K562 (cell line): ENCODE measurements at regions of chr20 and their contacts with region 1.

Region 1: GRCh38 chr20:5741089-5741488 is 9.1 kb upstream of the SHLD1 start:
- DNase-seq: peak; percentile 55 to 83 (median 64)
- ATAC-seq: peak; percentile 80
- H3K4me3 ChIP-seq: no peak overlapping the region
- H3K27ac ChIP-seq: no peak overlapping the region
- H3K4me1 ChIP-seq: peaks cover 16 to 20% of the 10 kb centered on the region in 2 experiments; a peak in 4 of 5 replicates
- H3K27me3 ChIP-seq: no peaks in the 10 kb centered on the region
- CTCF ChIP-seq: no peak
- EP300 ChIP-seq: peak; percentile 86
- POLR2A ChIP-seq: no peak
- RAD21 ChIP-seq: no peak

Region 2: DNA sequence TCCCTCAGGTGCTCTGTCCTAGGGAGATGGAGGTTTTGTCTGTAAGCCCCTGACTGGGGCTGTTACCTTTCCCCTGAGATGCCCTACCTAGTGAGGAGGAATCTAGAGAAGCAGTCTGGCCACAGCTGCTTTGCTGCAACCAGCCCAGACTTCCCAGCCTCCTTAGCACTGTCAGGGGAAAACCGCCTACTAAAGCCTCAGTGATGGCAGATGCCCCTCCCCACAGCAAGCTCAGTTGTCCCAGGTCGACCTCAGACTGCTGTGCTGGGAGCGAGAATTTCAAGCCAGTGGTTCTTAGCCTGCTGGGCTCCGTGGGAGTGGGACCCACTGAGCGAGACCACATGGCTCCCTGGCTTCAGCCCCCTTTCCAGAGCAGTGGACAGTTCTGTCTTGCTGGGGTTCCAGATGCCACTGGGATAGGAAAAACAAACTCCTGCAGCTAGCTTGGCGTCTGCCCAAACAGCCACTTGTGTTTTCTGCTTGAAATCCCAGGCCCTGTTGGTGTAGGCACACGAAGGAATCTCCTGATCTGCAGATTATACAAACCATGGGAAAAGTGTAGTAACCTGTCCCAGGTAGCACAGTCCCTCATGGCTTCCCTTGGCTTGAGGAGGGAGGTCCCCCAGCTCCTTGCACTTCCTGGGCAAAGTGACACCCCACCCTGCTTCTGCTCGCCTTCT is 277.9 kb before region 1 on chr20:
- CTCF ChIA-PET with region 1: no interaction called
- POLR2A ChIA-PET with region 1: no interaction called
- in situ Hi-C with region 1: no loop called
- intact Hi-C with region 1: no loop called
- DNase-seq: no peak
- ATAC-seq: no peak
- H3K4me3 ChIP-seq: no peak overlapping the region
- H3K27ac ChIP-seq: no peak overlapping the region
- H3K4me1 ChIP-seq: peaks cover 0 to 4% of the 10 kb centered on the region in 2 experiments; a peak in 1 of 5 replicates
- H3K27me3 ChIP-seq: peaks cover 0 to 9% of the 10 kb centered on the region in 2 experiments; a peak in 2 of 5 replicates
- CTCF ChIP-seq: no peak
- EP300 ChIP-seq: no peak
- POLR2A ChIP-seq: no peak
- RAD21 ChIP-seq: no peak

Region 3: GRCh38 chr20:5658912-5659345 is 82.2 kb before region 1 on chr20:
- CTCF ChIA-PET with region 1: no interaction called
- POLR2A ChIA-PET with region 1: no interaction called
- in situ Hi-C with region 1: no loop called
- intact Hi-C with region 1: no loop called
- DNase-seq: peak in 1 of 4 experiments; percentile 52
- ATAC-seq: 0 out of 3 replicates have a peak, but pooled peaks have one; percentile 12
- H3K4me3 ChIP-seq: no peak overlapping the region
- H3K27ac ChIP-seq: peak overlapping the region; percentile 54; the same call in 1 of the 3 replicates
- H3K4me1 ChIP-seq: peaks cover 8 to 18% of the 10 kb centered on the region in 2 experiments
- H3K27me3 ChIP-seq: no peaks in the 10 kb centered on the region
- CTCF ChIP-seq: no peak
- EP300 ChIP-seq: no peak
- POLR2A ChIP-seq: no peak
- RAD21 ChIP-seq: no peak

Region 4: DNA sequence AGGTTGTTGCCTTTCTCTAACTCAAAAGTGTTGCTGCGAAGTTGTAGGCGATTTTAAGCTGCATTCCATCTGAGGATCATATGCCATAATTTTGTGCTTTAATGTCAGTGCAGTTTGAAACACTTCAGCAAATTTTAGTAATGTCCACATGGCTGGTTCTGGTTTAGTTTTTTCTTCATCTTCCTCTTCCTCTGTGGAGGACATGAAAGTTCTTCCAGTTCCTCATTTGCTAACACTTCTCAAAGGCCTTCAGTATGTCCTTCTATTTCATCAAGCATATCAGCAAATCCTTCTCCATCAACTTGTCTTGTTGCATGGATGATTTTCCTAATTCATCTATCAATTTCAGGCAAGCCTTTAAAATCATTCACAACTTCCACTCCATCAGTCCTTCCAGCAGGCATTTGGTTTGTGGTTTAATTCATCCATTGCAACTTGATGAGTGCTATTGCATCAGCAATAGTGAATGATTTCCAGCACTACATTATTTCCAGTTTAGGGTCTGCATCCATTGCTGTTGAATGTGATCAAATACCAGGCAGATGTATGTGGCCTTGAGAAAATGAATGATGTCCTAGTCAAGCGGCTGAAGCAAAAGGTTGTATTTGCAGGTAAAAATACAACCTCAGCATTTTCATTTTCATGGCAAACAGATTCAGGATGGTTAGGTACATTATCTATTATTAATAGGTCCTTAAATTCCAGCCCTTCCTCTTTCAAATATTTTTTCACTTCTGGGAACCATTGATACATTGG is 29.3 kb after region 1 on chr20:
- CTCF ChIA-PET with region 1: no interaction called
- POLR2A ChIA-PET with region 1: no interaction called
- in situ Hi-C with region 1: no loop called
- intact Hi-C with region 1: no loop called
- DNase-seq: no peak
- ATAC-seq: peak; percentile 43; the same call in 2 of the 3 replicates
- H3K4me3 ChIP-seq: no peak overlapping the region
- H3K27ac ChIP-seq: no peak overlapping the region
- H3K4me1 ChIP-seq: peaks cover 0 to 14% of the 10 kb centered on the region in 2 experiments; a peak in 3 of 5 replicates
- H3K27me3 ChIP-seq: no peaks in the 10 kb centered on the region
- CTCF ChIP-seq: no peak
- EP300 ChIP-seq: peak; percentile 40; the same call in 1 of the 2 replicates
- POLR2A ChIP-seq: no peak
- RAD21 ChIP-seq: no peak

Region 5: GRCh38 chr20:5780846-5781217 is 39.7 kb after region 1 on chr20:
- CTCF ChIA-PET with region 1: no interaction called
- POLR2A ChIA-PET with region 1: no interaction called
- in situ Hi-C with region 1: no loop called
- intact Hi-C with region 1: loop called (anchors 5 kb)
- DNase-seq: peak; percentile 13 to 47 (median 27)
- ATAC-seq: peak; percentile 50
- H3K4me3 ChIP-seq: no peak overlapping the region
- H3K27ac ChIP-seq: peak overlapping the region; percentile 66
- H3K4me1 ChIP-seq: peaks cover 43 to 48% of the 10 kb centered on the region in 2 experiments
- H3K27me3 ChIP-seq: no peaks in the 10 kb centered on the region
- CTCF ChIP-seq: no peak
- EP300 ChIP-seq: peak; percentile 49
- POLR2A ChIP-seq: no peak
- RAD21 ChIP-seq: no peak